AG04449 (cell line): ENCODE measurements at regions of chr2 and their contacts with region 1.

Region 1: DNA sequence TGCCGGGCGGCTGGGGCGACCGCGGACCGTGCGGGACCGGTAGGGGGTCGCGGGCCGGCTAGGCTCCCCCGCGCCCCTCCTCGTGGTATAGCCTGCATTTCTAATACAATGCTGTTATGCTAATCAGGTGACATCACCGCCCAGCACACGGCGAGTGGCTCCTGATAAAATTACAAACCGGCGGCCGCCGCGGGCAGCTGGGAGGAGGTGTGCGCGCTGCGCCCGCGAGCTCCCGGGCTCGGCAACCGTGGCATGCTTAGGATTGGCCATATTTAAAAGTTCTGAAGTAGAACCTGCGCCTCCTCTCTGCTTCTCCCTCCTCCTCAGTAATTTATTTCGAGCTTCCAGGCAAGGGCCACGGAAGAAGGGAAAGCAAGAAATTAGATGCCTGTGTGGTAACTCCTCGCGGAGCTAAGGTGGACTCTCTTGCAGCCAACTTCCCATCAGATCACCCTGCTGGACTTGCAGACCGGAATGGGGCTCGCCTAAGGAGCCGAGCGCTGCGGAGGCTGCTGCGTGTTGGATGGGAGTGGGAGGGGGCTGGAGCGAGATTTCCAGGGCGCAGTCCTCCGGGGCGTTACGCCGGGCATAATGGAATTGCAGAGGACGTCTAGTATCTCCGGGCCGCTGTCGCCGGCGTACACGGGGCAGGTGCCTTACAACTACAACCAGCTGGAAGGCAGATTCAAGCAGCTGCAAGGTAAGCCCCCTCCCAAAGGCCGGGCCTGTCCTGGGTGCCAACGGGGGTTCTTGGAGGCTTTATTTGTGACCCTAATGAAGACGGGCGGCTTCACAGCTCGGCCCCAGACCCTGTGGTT is 102.3 kb downstream of the SPTBN1 start:
- DNase-seq: no peak
- H3K4me3 ChIP-seq: peak overlapping the region; percentile 61
- CTCF ChIP-seq: no peak

Region 2: DNA sequence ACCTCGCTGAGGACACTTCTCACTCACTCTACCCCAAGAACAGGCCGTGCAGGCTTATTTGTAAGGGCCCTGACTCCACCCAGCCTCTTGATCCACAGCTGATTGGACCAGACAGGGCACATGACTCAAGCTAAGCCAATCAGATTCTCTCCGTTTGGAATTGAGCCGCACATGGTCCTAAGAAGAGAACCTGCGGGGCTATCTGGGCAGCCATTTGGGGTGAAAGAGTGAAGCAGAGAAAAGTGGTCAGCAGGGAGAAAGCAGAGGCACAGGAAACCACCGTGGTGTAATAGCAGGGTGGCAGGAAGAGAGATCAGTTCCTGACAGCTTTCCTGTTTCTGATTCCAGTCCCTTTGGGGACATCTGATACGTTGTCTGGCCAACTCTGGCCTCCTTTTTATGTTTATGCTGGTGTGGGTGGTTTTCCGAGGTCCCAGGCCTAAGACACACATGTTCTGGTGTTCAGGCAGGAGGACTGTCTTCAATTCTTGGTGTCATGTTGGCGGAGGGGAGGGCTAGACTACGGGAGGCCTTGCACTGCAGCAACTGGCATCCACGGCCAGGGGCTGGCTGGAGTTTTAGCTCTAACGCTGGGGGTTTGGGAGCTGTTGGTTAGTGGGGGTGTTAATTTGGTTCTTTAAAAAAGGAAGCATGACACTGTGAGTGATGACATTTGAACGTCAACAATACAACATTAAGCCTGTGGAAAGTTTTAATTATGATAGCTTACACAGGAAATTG is 128.4 kb before region 1 on chr2:
- CTCF ChIA-PET with region 1: no interaction called
- POLR2A ChIA-PET with region 1: no interaction called
- DNase-seq: no peak
- H3K4me3 ChIP-seq: no peak overlapping the region
- CTCF ChIP-seq: no peak

Region 3: GRCh38 chr2:54522624-54523281 is 35.6 kb before region 1 on chr2:
- CTCF ChIA-PET with region 1: interaction called, 8 read pairs
- POLR2A ChIA-PET with region 1: interaction called, 10 read pairs
- DNase-seq: no peak
- H3K4me3 ChIP-seq: no peak overlapping the region
- CTCF ChIP-seq: peak; percentile 50

Region 4: DNA sequence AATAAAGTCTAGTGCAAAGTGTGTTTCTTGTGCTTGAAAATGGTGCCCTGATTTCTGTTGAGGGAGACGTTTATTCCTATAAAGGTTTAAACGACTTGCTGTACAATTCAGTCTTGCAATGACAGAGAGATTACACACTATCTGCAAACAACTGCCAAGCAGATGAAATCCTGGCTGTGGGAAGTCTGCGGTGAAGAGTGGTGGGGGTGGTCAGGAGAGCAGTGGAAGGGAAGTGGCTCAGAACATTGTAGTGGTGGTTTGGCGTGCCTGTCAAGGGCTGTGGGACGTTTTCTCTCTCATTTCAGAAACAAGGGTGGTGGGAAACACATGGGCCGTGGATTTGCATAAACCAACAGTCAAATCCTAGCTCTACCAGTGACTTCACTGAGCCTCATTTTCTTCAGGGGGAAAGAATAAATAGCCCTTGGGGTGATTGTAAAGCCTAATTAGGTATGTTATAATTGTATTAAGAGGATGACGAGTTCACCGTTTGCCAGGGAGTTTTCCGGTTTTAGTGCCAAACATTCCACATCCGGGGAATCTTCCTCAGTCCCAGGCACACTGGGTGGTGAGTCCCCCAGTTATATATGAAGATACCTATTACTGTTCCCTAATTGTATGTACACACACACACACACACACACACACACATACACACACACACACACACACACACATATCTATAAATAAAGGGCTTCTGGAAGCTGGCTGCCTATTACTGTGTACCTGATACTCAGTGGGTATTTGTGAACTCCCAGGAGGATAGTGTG is 12.7 kb after region 1 on chr2:
- CTCF ChIA-PET with region 1: interaction called, 5 read pairs
- POLR2A ChIA-PET with region 1: interaction called, 14 read pairs
- DNase-seq: no peak
- H3K4me3 ChIP-seq: peak overlapping the region; percentile 7; the same call in 1 of the 2 replicates
- CTCF ChIP-seq: no peak

Region 5: DNA sequence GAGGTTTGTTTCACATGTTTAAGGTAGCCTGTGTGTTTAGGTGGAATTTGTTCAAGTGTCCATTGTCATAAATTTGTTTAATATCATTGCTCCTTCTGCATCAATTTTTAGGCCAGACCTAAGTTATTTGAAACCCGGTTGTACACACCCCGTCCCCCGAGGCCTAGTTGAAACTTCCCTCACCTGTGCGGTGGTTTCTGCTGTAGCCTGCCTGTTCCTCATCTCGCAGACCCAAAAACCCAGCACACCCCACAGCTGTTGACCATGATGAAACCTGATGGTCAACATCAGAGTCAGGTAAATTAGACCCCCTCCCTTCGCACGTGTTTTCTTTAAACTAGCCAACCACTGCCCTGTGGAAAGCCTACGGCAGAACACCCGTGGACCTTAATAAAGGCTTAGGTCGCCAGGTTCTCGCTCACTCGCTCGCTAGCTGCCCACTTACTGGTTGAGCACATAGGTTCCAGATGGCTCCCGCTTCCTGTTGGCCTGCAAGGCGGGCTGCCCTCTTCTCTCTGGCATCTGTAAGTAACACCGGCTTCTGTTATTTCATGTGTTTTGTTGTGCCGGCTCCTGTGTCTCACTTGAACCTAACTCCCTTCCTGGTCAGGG is 229.5 kb after region 1 on chr2:
- CTCF ChIA-PET with region 1: no interaction called
- POLR2A ChIA-PET with region 1: no interaction called
- DNase-seq: no peak
- H3K4me3 ChIP-seq: no peak overlapping the region
- CTCF ChIP-seq: no peak